ENCODE measurements at regions of chr12 and their contacts with region 1.

Region 1: DNA sequence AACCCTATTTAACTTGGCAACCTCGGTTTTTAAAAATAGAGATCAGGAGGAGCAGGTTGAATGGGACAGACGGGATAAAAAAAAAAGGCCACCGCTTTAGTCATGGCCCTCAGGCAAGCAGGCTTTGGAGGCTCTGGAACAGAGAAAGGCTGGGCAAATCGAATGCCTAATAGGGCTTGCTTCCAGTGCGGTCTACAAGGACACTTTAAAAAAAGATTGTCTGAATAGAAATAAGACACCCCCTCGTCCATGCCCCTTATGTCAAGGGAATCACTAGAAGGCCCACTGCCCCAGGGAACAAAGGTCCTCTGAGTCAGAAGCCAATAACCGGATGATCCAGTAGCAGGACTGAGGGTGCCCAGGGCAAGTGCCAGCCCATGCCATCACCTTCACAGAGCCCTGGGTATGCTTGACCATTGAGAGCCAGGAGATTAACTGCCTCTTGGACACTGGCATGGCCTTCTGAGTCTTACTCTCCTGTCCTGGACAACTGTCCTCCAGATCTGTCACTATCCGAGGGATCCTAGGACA is 265.7 kb downstream of the CPNE8 start:
- DNase-seq: peak; percentile 66
- ATAC-seq: no peak
- H3K4me3 ChIP-seq: no peak overlapping the region
- H3K27ac ChIP-seq: no peak overlapping the region
- H3K4me1 ChIP-seq: no peaks in the 10 kb centered on the region
- H3K27me3 ChIP-seq: no peaks in the 10 kb centered on the region
- CTCF ChIP-seq: no peak

Region 2: GRCh38 chr12:38384816-38385378 is 254.8 kb before region 1 on chr12:
- CTCF ChIA-PET with region 1: no interaction called
- POLR2A ChIA-PET with region 1: no interaction called
- intact Hi-C with region 1: no loop called
- DNase-seq: peak; percentile 98
- ATAC-seq: peak; percentile 89
- H3K4me3 ChIP-seq: peak overlapping the region; percentile 45
- H3K27ac ChIP-seq: peak overlapping the region; percentile 96
- H3K4me1 ChIP-seq: peaks cover 48% of the 10 kb centered on the region
- H3K27me3 ChIP-seq: no peaks in the 10 kb centered on the region
- CTCF ChIP-seq: peak; percentile 72

Region 3: DNA sequence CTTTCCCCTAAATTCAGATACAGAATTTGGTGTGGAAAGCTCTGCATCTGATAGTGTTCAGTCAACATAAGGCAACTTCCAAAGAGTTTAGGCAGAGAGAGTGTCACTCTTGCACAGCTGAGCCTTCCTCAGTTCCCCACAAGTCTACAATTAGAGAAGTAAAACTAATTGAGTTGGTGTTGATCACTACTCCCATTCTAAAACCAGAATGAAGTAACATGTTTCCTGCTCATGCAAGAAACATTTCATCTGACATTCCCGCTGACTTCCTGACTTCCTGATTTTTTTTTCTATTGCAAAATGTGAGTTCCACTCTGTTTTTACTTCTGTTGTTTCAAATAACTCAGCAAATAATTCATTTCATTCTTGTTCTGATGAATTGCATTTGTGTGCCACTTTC is 52.1 kb before region 1 on chr12:
- CTCF ChIA-PET with region 1: no interaction called
- POLR2A ChIA-PET with region 1: no interaction called
- intact Hi-C with region 1: loop called (anchors 10 kb)
- DNase-seq: no peak
- ATAC-seq: no peak
- H3K4me3 ChIP-seq: no peak overlapping the region
- H3K27ac ChIP-seq: no peak overlapping the region
- H3K4me1 ChIP-seq: peaks cover 30% of the 10 kb centered on the region
- H3K27me3 ChIP-seq: no peaks in the 10 kb centered on the region
- CTCF ChIP-seq: no peak

Region 4: GRCh38 chr12:38761636-38762342 is 122.1 kb after region 1 on chr12:
- CTCF ChIA-PET with region 1: no interaction called
- POLR2A ChIA-PET with region 1: no interaction called
- intact Hi-C with region 1: no loop called
- DNase-seq: no peak
- ATAC-seq: no peak
- H3K4me3 ChIP-seq: no peak overlapping the region
- H3K27ac ChIP-seq: no peak overlapping the region
- H3K4me1 ChIP-seq: no peaks in the 10 kb centered on the region
- H3K27me3 ChIP-seq: no peaks in the 10 kb centered on the region
- CTCF ChIP-seq: no peak